MCF 10A (cell line): ENCODE measurements at regions of chr2 and their contacts with region 1.

Region 1: GRCh38 chr2:223957092-223957851 is at the start of gene MRPL44:
- DNase-seq: peak; percentile 95
- H3K4me3 Mint-ChIP-seq: peak within 1 kb of the TSS; percentile 92
- H3K27ac Mint-ChIP-seq: peak within 1 kb of the TSS; percentile 95
- H3K4me1 Mint-ChIP-seq: peaks cover 15% of the 10 kb centered on the region
- H3K27me3 Mint-ChIP-seq: no peaks in the 10 kb centered on the region
- CTCF ChIP-seq: no peak
- total RNA-seq, gene MRPL44: 27.4 and 31.2 TPM in 2 replicates

Region 2: DNA sequence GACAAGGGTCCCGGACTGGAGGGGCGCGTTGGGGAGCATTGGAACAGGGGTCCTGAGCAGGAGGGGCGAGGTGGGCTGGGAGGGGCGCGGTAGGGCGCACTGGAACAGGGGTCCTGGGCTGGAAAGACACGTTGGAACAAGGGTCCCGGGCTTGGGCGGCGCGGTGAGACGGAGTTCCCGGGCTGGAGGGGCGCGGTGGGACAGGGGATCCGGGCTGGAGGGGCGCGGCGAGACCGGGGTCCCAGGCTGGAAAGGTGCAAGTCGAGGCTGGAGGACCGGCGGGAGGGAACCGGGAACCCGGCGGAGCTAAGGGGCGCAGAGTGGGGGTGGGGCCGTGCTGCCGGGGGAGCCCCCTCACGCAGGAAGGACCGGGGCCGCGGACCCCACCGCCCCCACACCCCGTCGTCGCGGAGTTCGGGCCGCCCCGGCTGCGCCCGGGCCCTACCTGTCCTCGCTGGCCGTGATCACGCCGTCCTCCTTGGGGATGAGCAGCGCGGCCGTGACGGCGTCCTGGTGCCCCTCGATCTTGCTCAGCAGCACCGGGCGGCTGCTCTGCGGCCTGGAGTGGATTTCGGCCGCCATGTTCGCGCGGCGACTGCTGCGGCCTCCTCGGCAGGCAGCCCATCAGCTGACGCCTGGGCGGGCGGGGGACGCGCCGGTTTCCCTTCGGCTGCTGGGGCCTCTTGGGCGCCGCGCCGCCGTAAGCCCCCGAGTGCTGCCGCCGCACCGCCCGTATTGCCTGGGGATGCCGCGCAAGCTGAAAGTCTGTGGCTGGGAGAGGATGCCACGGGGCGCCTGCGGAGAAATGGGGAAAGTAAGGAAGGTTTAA is 12.4 kb before region 1 on chr2 and contains the start of gene WDFY1:
- CTCF ChIA-PET with region 1: interaction called, 4 read pairs
- POLR2A ChIA-PET with region 1: interaction called, 71 read pairs
- intact Hi-C with region 1: loop called (anchors 1 kb)
- DNase-seq: peak; percentile 79
- H3K4me3 Mint-ChIP-seq: peak within 1 kb of the TSS; percentile 96
- H3K27ac Mint-ChIP-seq: peak within 1 kb of the TSS; percentile 90
- H3K4me1 Mint-ChIP-seq: peaks cover 30% of the 10 kb centered on the region
- H3K27me3 Mint-ChIP-seq: no peaks in the 10 kb centered on the region
- CTCF ChIP-seq: no peak
- total RNA-seq, gene WDFY1: 36.9 and 41.8 TPM in 2 replicates